ENCODE measurements at regions of chr22 and their contacts with region 1.

Region 1: DNA sequence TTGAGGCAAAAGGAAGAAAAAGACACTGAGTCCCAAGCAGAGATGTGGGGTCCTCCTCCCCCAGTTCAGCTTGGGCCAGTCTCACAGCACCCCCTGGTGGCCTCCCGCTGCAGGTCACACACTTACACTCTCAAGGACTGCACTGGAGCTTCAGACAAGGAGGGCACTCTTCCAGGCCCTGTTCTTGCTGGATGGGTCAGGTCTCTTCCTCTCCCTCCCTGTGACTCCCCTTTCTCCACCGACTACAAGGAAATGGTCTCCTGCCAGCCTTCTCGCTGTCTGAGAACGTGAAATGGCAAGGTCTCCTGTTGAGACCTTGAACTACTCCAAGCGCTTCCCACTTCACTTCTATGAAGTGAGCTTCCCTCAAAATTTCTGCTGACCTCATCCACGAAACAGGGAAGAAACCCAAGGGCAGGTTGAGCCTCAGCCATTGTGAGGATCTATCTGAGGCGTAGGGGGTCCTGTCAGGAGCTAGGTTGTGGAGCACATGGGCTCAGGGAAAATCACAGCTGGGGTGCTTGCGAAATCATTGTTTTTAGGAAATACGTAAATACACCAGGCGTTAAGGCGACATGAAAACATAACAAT is 11.2 kb upstream of the IGLL1 start:
- H3K4me3 Mint-ChIP-seq: no peak overlapping the region
- H3K27ac Mint-ChIP-seq: peak overlapping the region; percentile 14
- H3K4me1 Mint-ChIP-seq: peaks cover 22% of the 10 kb centered on the region
- H3K27me3 Mint-ChIP-seq: peaks cover 2% of the 10 kb centered on the region

Region 2: GRCh38 chr22:23509571-23510305 is 81.6 kb before region 1 on chr22:
- intact Hi-C with region 1: no loop called
- H3K4me3 Mint-ChIP-seq: no peak overlapping the region
- H3K27ac Mint-ChIP-seq: no peak overlapping the region
- H3K4me1 Mint-ChIP-seq: no peaks in the 10 kb centered on the region
- H3K27me3 Mint-ChIP-seq: no peaks in the 10 kb centered on the region

Region 3: GRCh38 chr22:23542933-23543332 is 48.4 kb before region 1 on chr22:
- intact Hi-C with region 1: loop called (anchors 5 kb)
- H3K4me3 Mint-ChIP-seq: no peak overlapping the region
- H3K27ac Mint-ChIP-seq: no peak overlapping the region
- H3K4me1 Mint-ChIP-seq: no peaks in the 10 kb centered on the region
- H3K27me3 Mint-ChIP-seq: peaks cover 20% of the 10 kb centered on the region